Right ventricle myocardium inferior (tissue), 1 donor: ENCODE measurements at regions of chr2 and their contacts with region 1.

Region 1: GRCh38 chr2:41414486-41415230 is 633.2 kb upstream of the PKDCC start:
- DNase-seq: no peak
- ATAC-seq: peak; percentile 16

Region 2: DNA sequence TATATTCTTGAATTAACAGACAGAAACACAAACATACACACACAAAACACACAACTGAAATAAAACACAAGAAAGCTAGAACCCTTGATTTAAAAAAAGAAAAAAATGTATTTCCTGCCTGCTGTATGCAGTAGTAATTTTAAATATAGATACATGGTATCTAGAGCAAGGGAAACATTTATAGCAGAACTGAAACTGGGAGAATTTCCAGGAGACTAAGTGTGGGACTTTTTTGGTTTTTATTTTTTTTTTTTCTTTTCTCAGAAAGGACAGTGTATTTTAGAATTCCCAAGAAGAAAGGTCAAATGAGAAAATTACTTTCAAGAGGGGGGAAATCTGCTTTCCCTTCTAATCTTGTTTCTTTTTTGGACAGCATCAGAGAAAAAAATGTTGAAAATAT is 74.2 kb after region 1 on chr2:
- intact Hi-C with region 1: loop called (anchors 10 kb)
- DNase-seq: no peak
- ATAC-seq: no peak

Region 3: DNA sequence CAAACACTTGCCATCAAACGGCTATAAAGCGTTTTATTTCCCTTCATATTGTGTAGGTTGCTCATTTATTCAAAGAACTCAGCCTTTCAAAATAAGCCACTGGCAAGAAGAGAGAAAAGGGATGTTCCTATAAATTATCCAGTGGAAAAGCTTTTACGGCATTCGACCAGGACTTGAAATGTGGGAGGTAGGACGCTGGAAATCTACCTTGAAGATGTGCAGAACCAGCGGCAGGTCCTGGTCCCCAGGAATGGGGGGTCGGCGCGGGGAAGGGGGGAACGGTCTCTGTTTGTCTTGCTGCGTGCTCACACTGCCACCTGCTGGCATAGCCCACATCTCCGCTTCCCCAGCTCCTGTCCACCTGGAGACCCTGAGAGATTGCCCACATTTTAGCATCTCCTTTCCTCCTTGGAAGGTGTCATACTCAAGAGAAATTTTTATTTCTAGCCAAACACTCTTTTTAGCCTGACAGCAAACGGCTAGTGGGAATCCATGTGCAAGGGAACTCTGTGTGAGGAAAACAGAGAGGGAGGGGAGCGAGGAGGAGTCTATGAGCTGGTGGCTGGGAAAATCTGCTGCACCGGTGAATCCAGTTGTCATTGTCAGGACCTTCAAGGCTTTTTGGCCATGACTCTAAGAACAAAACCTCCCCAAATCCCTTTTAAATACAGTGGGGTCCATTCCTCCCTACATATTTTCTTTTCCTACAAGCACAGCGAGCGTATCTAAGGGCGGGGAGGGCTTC is 284.2 kb after region 1 on chr2:
- intact Hi-C with region 1: loop called (anchors 1 kb)
- DNase-seq: peak; percentile 74
- ATAC-seq: peak; percentile 72